HCT116 (cell line): ENCODE measurements at regions of chr9 and their contacts with region 1.

Region 1: GRCh38 chr9:136686794-136687711 is at the start of gene AGPAT2:
- DNase-seq: peak; percentile 28
- ATAC-seq: peak; percentile 88
- H3K4me3 ChIP-seq: peak within 1 kb of the TSS; percentile 81 to 89
- H3K27ac ChIP-seq: peak within 1 kb of the TSS; percentile 86
- H3K4me1 ChIP-seq: peaks cover 31 to 48% of the 10 kb centered on the region in 2 experiments
- H3K27me3 ChIP-seq: no peaks in the 10 kb centered on the region
- CTCF ChIP-seq: no peak
- POLR2A ChIP-seq: peak; percentile 49
- RAD21 ChIP-seq: no peak
- total RNA-seq, gene AGPAT2: 86.0 TPM

Region 2: GRCh38 chr9:135726138-135726853 is 960.8 kb before region 1 on chr9:
- CTCF ChIA-PET with region 1: no interaction called
- POLR2A ChIA-PET with region 1: no interaction called
- RAD21 ChIA-PET with region 1: no interaction called
- intact Hi-C with region 1: no loop called
- DNase-seq: no peak
- ATAC-seq: peak; percentile 52
- H3K4me3 ChIP-seq: no peak overlapping the region
- H3K27ac ChIP-seq: no peak overlapping the region
- H3K4me1 ChIP-seq: no peaks in the 10 kb centered on the region
- H3K27me3 ChIP-seq: no peaks in the 10 kb centered on the region
- CTCF ChIP-seq: peak; percentile 39 to 50 (median 48); a peak in 5 of 6 replicates
- POLR2A ChIP-seq: no peak
- RAD21 ChIP-seq: peak; percentile 65

Region 3: GRCh38 chr9:136671646-136672430 is 15.2 kb before region 1 on chr9:
- CTCF ChIA-PET with region 1: interaction called, 18 read pairs
- POLR2A ChIA-PET with region 1: interaction called, 3 read pairs
- RAD21 ChIA-PET with region 1: no interaction called
- intact Hi-C with region 1: loop called (anchors 2 kb)
- DNase-seq: no peak
- ATAC-seq: peak; percentile 67
- H3K4me3 ChIP-seq: no peak overlapping the region
- H3K27ac ChIP-seq: no peak overlapping the region; the same call in 1 of the 2 replicates
- H3K4me1 ChIP-seq: peaks cover 0 to 37% of the 10 kb centered on the region in 2 experiments; a peak in 2 of 4 replicates
- H3K27me3 ChIP-seq: no peaks in the 10 kb centered on the region
- CTCF ChIP-seq: peak in 2 of 3 experiments; percentile 87 to 95; a peak in 4 of 6 replicates
- POLR2A ChIP-seq: no peak
- RAD21 ChIP-seq: no peak